SK-N-SH (cell line): ENCODE measurements at regions of chr11 and their contacts with region 1.

Region 1: GRCh38 chr11:125887373-125888324 is at the start of gene HYLS1:
- DNase-seq: peak; percentile 90
- H3K4me3 ChIP-seq: peak within 1 kb of the TSS; percentile 73 to 82
- H3K27ac ChIP-seq: peak within 1 kb of the TSS; percentile 61 to 90
- H3K4me1 ChIP-seq: no peaks in the 10 kb centered on the region; a peak in 2 of 4 replicates
- H3K27me3 ChIP-seq: no peaks in the 10 kb centered on the region
- CTCF ChIP-seq: peak; percentile 25; the same call in 1 of the 2 replicates
- EP300 ChIP-seq: no peak
- RAD21 ChIP-seq: no peak; the same call in 1 of the 2 replicates
- polyA plus RNA-seq, gene HYLS1: 1.3 and 1.4 TPM in 2 replicates

Region 2: GRCh38 chr11:125874556-125875124 is 13.0 kb before region 1 on chr11:
- CTCF ChIA-PET with region 1: interaction called, 22 read pairs
- POLR2A ChIA-PET with region 1: interaction called, 4 read pairs
- DNase-seq: peak; percentile 77
- H3K4me3 ChIP-seq: peak overlapping the region; percentile 19 to 48; a peak in 3 of 4 replicates
- H3K27ac ChIP-seq: no peak overlapping the region
- H3K4me1 ChIP-seq: no peaks in the 10 kb centered on the region
- H3K27me3 ChIP-seq: no peaks in the 10 kb centered on the region
- CTCF ChIP-seq: peak; percentile 86
- EP300 ChIP-seq: no peak
- RAD21 ChIP-seq: peak; percentile 91

Region 3: DNA sequence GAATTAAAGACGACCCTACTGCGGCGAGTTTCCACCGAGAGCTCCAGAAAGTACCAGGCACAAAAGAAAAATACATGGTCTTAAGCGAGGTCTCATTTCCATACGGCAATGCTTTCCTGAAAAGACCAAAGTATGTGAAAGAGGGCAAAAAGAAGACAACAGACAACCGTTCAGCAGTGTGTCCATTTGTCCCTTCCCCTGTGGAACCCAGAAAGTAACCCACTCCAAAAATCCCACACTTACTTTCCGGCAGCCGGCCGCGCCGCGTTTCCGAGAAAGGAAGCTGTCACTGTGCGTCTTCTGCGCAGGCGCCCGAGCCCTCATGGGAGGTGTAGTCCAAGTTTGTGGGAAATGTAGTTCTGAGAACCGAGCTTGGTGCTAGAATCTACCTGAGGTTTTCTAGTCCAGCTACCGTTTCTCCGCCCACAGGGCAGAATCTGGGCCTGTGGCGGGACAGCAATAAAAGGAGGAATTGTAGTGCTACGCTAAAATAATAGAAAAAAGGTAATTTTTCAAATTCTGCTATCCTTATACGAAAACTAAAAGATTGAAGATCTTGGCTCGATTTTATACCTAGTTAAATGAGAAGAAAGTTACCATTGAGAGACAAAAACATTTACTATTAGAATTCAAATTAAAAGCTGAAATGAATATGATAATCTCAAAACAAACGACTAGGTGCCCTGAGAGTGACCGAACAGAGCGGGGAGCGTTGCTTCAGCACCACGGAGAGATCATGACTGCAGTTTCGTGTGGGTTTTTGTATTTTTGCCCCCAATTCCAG is 15.5 kb after region 1 on chr11 and contains the start of gene PUS3:
- CTCF ChIA-PET with region 1: interaction called, 3 read pairs
- POLR2A ChIA-PET with region 1: interaction called, 11 read pairs
- DNase-seq: peak; percentile 90
- H3K4me3 ChIP-seq: peak within 1 kb of the TSS; percentile 95 to 98
- H3K27ac ChIP-seq: peak within 1 kb of the TSS; percentile 44 to 81; a peak in 3 of 4 replicates
- H3K4me1 ChIP-seq: peaks cover 0 to 8% of the 10 kb centered on the region in 2 experiments; a peak in 2 of 4 replicates
- H3K27me3 ChIP-seq: peaks cover 12% of the 10 kb centered on the region; the same call in 1 of the 2 replicates
- CTCF ChIP-seq: no peak
- EP300 ChIP-seq: no peak
- RAD21 ChIP-seq: no peak
- polyA plus RNA-seq, gene PUS3: 7.0 and 8.3 TPM in 2 replicates